HAP-1 (cell line): ENCODE measurements at regions of chr6 and their contacts with region 1.

Region 1: GRCh38 chr6:14210663-14211561 is 93.3 kb downstream of the CD83 start:
- DNase-seq: peak; percentile 82 to 93
- H3K4me3 ChIP-seq: peak overlapping the region; percentile 49
- H3K4me1 ChIP-seq: peaks cover 8% of the 10 kb centered on the region
- H3K27me3 ChIP-seq: no peaks in the 10 kb centered on the region

Region 2: DNA sequence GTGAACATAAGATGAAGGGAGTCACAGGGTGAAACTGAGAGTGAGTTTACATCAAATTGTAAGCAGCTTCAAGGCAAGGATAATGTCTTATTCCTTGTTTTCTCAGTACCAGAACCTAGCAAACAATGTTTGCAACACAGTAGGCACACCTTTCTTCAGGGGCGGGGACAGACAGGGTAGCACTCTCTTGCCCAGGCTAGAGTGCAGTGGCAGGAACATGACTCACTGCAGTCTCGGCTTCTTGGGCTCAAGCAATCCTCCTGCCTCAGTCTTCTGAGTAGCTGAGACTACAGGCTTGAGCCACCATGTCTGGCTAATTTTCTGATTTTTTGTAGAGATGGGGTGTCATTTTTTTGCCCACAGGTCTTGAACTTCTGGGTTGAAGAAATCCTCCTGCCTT is 206.5 kb after region 1 on chr6:
- in situ Hi-C with region 1: no loop called
- DNase-seq: no peak
- H3K4me3 ChIP-seq: no peak overlapping the region
- H3K4me1 ChIP-seq: no peaks in the 10 kb centered on the region
- H3K27me3 ChIP-seq: no peaks in the 10 kb centered on the region

Region 3: DNA sequence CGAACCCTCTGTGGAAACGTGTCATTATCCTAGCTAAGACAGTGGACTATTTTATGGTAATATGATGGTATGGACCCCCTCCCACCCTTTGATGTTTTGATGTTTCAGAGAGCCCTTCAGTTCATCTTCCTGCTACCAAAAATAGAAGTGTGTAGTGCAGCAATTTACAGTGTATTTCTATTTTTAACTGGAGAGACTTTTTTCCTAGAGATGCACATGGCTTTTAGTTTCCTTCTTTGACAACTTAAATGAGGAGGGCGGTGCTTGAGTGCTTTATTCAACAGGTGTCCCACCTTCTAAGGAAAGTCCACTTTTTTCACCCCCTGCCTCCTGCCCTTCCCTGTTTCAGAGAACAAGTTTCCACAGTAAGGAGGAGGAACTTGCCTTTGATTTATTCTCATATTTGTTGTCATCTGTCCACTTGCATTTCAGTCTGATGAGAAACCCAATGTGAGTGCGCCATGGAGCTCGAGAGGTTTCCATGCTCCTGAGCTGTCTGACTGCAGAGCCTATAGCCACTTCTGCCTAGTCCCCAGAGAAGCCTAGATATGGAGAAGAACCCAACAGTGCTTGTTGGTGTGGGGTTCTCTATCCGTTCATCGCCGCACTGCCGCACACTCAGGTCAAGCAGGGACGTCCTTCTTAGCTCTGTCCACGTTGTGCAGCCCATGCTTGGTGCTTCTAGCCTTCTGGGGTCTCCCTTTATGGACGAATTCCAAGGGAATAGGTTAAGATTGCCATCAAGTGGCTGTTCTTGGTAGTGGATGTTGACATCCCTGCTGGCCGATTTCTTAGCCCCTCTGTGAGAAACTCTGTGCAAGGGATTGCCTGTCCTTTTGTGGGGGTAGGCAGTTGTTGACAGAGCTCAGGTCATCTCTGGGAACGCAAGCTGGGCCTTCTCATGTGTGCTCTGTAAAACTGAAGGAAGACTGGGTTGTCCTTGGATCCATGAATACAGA is 1179.1 kb after region 1 on chr6:
- in situ Hi-C with region 1: loop called (anchors 10 kb)
- DNase-seq: peak; percentile 57 to 68
- H3K4me3 ChIP-seq: no peak overlapping the region
- H3K4me1 ChIP-seq: peaks cover 2% of the 10 kb centered on the region; the same call in 1 of the 2 replicates
- H3K27me3 ChIP-seq: no peaks in the 10 kb centered on the region

Region 4: GRCh38 chr6:15491255-15491985 is 1280.5 kb after region 1 on chr6:
- in situ Hi-C with region 1: loop called (anchors 25 kb)
- DNase-seq: peak; percentile 57 to 78
- H3K4me3 ChIP-seq: no peak overlapping the region
- H3K4me1 ChIP-seq: peaks cover 6% of the 10 kb centered on the region; the same call in 1 of the 2 replicates
- H3K27me3 ChIP-seq: no peaks in the 10 kb centered on the region

Region 5: DNA sequence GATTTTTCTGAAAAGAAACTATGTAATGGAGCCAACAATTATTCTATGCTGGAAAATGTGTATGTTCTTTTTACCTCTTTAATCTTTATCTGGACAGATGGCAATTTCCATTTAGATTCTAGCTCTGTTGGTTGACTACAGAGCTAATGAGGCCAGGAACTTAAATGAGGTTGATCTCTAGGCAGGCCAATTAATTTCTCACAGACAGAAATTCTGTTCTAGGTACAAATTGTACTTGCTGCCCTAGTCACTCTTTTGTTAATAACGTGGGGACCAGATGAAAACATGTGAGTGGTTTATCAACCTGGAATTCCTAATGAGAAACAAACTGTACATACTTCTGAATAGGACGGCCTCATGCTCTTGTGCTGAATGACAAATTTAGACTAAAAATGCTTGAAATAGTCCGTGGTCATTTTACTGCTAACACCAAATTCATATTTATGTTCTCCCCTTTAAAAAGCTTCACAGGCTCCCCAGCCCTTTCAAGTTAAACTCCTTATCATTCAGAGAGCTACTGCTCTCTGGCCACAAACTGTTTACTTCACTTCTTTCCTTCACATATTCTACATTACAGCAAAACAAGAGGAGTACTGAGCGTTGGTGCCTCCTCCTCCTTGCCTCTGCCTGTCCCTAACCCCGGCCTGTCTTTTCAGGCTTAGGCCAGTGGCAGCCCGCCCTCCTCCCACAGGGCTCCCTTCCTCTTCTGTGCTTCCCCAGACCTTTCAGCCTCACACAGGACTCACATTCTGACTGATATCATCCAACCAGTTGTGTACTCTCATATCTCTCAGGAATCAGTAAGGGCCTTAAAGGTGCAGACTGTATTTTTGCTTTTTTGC is 1410.5 kb after region 1 on chr6:
- in situ Hi-C with region 1: loop called (anchors 25 kb)
- DNase-seq: no peak
- H3K4me3 ChIP-seq: no peak overlapping the region
- H3K4me1 ChIP-seq: peaks cover 4% of the 10 kb centered on the region
- H3K27me3 ChIP-seq: no peaks in the 10 kb centered on the region